OCI-LY7 (cell line): ENCODE measurements at regions of chr11 and their contacts with region 1.

Region 1: GRCh38 chr11:27329867-27330632 is 33.0 kb downstream of the CCDC34 start:
- DNase-seq: no peak
- H3K4me3 ChIP-seq: no peak overlapping the region
- H3K27ac ChIP-seq: no peak overlapping the region
- H3K4me1 ChIP-seq: no peaks in the 10 kb centered on the region
- CTCF ChIP-seq: no peak

Region 2: GRCh38 chr11:27254729-27255446 is 75.2 kb before region 1 on chr11:
- CTCF ChIA-PET with region 1: no interaction called
- POLR2A ChIA-PET with region 1: no interaction called
- intact Hi-C with region 1: loop called (anchors 1 kb)
- DNase-seq: no peak
- H3K4me3 ChIP-seq: no peak overlapping the region
- H3K27ac ChIP-seq: no peak overlapping the region
- H3K4me1 ChIP-seq: no peaks in the 10 kb centered on the region
- CTCF ChIP-seq: no peak